Activated naive CD4-positive, alpha-beta T cell treated with anti-CD3 and anti-CD28 coated beads for 36 hours (primary cell): ENCODE measurements at regions of chr19 and their contacts with region 1.

Region 1: GRCh38 chr19:7355151-7355820 is 6.5 kb downstream of the ARHGEF18 start:
- DNase-seq: no peak
- H3K4me3 Mint-ChIP-seq: no peak overlapping the region
- H3K27ac Mint-ChIP-seq: no peak overlapping the region
- H3K4me1 Mint-ChIP-seq: peaks cover 49% of the 10 kb centered on the region
- H3K27me3 Mint-ChIP-seq: no peaks in the 10 kb centered on the region

Region 2: DNA sequence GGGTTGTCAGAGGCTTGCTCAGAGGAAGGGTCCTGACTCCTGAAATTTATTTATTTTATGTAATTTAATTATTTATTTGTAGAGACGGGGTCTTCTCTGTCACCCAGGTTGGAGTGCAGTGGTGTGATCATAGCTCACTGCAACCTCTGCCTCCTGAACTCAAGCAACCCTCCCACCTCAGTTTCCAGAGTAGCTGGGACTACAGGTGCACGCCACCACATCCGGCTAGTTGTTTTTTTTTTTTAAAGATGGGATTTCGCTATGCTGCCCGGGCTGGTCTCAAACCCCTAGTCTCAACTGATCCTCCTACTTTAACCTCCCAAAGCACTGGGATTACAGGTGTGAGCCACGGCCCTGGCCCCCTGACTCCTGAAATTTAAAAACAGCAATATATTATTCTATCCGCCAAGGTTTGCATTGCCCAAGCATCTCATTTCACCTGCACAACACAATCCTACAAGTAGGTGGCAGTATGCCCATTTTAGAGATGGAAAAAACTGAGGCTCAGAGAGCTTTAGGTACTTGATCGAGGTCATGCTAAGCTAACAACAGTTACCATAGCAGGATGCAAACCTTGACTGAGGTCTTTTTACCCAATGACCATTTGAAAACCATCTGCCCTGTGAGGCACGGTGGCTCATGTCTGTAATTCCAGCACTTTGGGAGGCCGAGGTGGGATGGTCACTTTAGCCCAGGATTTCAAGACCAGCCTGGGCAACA is 11.6 kb after region 1 on chr19:
- CTCF ChIA-PET with region 1: interaction called, 35 read pairs
- intact Hi-C with region 1: no loop called
- DNase-seq: peak; percentile 50
- H3K4me3 Mint-ChIP-seq: no peak overlapping the region
- H3K27ac Mint-ChIP-seq: no peak overlapping the region
- H3K4me1 Mint-ChIP-seq: peaks cover 6% of the 10 kb centered on the region
- H3K27me3 Mint-ChIP-seq: no peaks in the 10 kb centered on the region

Region 3: DNA sequence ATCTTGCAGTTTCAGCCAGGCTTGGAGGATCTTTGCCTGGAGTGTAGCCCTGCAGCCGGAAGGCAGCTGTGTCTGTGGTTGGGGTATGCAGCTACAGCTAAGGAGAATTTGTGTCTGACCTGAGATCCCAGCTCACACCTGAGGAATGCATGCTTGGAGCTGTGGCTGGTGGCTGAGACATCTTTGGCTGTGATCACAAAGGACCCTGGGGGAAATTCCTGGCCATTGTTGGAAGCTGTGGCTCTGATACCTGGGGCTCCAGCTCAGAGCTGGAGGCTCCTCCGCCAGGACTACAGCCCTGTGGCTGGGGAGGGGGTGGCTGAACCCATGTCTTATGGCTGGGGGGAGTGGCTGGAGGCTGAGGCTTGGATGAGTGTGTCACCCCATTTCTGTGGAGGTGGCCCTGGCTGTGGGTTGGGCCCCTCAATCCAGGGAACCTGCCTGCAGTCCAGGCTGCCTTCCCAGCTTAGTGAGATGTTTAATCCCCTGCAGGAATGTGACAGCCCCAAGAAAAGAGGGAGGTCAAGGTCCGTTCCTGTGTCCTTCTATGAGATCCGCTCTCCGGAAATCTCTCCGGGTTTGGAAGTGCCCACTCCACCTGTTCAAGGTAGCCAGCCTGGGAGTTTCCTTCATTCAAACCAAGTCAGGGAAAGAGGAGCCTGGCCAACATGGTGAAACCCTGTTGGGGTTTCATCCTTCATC is 21.0 kb after region 1 on chr19:
- CTCF ChIA-PET with region 1: interaction called, 46 read pairs
- intact Hi-C with region 1: loop called (anchors 1 kb)
- DNase-seq: no peak
- H3K4me3 Mint-ChIP-seq: no peak overlapping the region
- H3K27ac Mint-ChIP-seq: no peak overlapping the region
- H3K4me1 Mint-ChIP-seq: peaks cover 2% of the 10 kb centered on the region
- H3K27me3 Mint-ChIP-seq: no peaks in the 10 kb centered on the region

Region 4: GRCh38 chr19:7382694-7383093 is 27.4 kb after region 1 on chr19:
- CTCF ChIA-PET with region 1: interaction called, 46 read pairs
- intact Hi-C with region 1: loop called (anchors 1 kb)
- DNase-seq: no peak
- H3K4me3 Mint-ChIP-seq: no peak overlapping the region
- H3K27ac Mint-ChIP-seq: no peak overlapping the region
- H3K4me1 Mint-ChIP-seq: peaks cover 9% of the 10 kb centered on the region
- H3K27me3 Mint-ChIP-seq: no peaks in the 10 kb centered on the region

Region 5: DNA sequence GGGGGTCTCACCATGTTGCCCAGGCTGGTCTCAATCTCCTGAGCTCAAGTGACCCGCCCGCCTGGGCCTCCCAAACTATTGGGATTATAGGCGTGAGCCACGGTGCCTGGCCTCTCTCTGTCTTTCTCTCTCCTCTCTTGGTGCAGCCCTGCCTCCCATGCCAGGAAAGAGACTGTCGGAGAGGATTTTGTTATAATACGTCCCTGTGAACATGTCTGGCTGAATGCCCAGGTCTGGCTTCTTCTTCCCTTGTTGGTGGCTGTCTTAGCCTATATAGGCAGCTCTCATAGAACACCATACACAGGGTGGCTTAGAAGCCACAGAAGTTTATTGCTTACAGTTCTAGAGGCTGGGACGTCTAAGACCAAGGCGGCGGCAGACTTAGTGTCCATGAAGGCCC is 87.1 kb after region 1 on chr19:
- CTCF ChIA-PET with region 1: no interaction called
- intact Hi-C with region 1: no loop called
- DNase-seq: no peak
- H3K4me3 Mint-ChIP-seq: no peak overlapping the region
- H3K27ac Mint-ChIP-seq: no peak overlapping the region
- H3K4me1 Mint-ChIP-seq: no peaks in the 10 kb centered on the region
- H3K27me3 Mint-ChIP-seq: no peaks in the 10 kb centered on the region